ENCODE measurements at regions of chr10 and their contacts with region 1.

Region 1: GRCh38 chr10:104121520-104122224 is at the start of gene SFR1:
- DNase-seq: peak; percentile 100
- total RNA-seq, gene SFR1: 7.2 TPM

Region 2: GRCh38 chr10:103911021-103911459 is 210.6 kb before region 1 on chr10:
- intact Hi-C with region 1: loop called (anchors 1 kb)
- DNase-seq: no peak

Region 3: GRCh38 chr10:103966671-103967447 is 154.8 kb before region 1 on chr10 and contains the start of gene SLK:
- intact Hi-C with region 1: loop called (anchors 1 kb)
- DNase-seq: peak; percentile 94
- total RNA-seq, gene SLK: 59.7 TPM

Region 4: DNA sequence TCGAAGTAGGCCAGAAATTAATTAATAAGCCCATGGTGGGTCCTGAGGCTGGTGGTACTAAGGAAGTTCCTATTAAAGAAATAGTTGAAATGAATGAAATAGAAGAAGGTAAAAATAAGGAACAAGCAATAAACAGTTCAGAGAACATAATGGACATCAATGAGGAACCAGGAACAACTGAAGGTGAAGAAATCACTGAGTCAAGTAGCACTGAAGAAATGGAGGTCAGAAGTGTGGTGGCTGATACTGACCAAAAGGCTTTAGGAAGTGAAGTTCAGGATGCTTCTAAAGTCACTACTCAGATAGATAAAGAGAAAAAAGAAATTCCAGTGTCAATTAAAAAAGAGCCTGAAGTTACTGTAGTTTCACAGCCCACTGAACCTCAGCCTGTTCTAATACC is 118.8 kb before region 1 on chr10:
- intact Hi-C with region 1: no loop called
- DNase-seq: no peak

Region 5: DNA sequence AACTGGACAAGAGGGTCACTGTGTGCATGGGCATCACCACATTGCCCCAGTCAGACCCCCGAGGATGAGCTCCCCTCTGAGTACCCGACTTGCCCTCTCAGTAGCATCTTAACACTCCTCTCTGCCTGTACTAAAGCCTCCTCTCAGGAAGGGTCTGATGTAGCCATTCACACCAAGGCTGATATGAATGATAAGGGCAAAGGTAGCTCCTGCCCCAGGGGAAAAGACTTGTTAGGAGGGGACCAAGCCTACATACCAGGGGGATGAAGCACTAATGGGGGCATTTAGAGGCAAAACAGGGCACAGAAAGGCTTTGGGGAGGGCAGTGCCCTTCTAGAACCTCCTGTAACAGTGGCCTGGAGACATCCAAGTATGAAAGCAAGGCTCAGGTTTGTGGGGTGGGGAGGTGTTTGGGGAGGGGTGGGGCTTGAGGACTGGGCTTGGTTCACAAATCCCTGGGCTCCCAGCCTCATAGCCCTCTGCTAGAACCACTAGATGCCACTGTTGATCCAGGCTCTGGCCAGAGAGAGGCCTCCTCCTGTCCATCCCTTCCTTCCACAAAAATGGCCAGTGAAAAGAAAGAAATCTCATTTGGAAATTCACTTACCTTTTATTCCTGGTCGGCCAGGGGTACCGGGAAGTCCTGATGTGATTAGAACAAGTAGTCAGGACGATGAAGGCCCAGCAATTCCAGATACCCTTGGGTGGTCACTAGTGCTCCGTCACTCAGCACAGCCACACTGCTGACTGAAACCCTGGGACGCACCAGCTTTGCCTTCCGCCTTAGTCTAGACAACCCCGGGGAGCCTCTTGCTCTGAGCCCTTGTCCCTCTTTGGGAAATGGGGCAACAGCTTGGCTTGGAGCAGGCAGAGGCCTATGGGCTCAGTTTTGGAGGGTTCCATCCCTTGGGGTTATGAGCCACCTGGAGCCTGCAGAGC is 76.3 kb before region 1 on chr10:
- intact Hi-C with region 1: no loop called
- DNase-seq: no peak

Region 6: DNA sequence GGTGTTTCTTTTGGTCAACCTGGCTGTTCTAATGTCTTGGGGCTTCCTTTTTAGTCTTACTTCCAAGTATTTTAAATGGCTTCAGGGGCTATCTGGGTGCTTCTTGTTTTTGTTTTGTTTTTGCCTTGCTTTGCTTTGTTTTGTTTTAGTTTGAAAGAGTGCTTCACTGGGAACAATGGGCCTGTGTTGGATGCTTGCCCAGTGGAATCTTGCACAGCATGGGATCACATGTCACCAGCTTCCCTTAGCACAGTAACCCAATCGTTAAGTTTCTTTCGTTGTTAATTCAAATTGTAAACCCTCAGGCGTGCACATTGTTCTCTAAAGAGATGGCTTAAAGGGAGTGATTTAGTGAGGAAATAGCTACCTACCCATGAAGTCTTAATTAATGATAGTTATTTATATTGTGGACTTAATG is 44.9 kb before region 1 on chr10:
- intact Hi-C with region 1: loop called (anchors 5 kb)
- DNase-seq: no peak

Region 7: GRCh38 chr10:104353325-104354048 is 231.8 kb after region 1 on chr10 and contains the start of gene CFAP58:
- intact Hi-C with region 1: loop called (anchors 10 kb)
- DNase-seq: peak; percentile 98
- total RNA-seq, gene CFAP58: 2.7 TPM

Measured in cardiac septum (tissue), 1 donor.